ENCODE measurements at regions of chr5 and their contacts with region 1.

Region 1: DNA sequence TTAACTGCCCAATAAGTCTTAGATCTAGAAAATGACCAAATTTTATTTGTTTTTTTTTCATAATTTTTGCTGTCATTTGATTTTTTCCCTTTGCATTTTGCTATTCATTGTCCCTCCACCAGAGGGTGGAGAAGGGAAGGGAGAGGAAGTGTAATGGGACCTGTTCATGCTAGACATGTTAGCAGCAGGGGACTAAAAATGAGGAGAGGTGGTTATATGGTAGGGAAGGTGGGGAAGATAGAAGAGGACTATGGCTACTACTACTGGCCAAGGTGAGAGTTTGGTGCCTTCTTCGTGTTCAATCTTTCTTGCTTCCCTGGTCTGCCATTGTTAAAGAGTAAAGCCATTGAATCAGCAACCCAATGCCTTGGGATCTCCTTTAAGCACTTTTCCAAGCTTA is 6.4 kb downstream of the GRIA1 start:
- DNase-seq: peak in 1 of 2 donors; percentile 8
- ATAC-seq: peak in 2 of 8 donors; percentile 52 to 53
- H3K4me3 ChIP-seq: no peak overlapping the region
- H3K27ac ChIP-seq: no peak overlapping the region
- H3K4me1 ChIP-seq: no peaks in the 10 kb centered on the region
- H3K27me3 ChIP-seq: peaks cover 0 to 24% (median 15%) of the 10 kb centered on the region in 7 donors
- CTCF ChIP-seq: peak; percentile 54 to 80 (median 74)

Region 2: GRCh38 chr5:152532714-152533113 is 964.1 kb before region 1 on chr5:
- intact Hi-C with region 1: loop called in 2 of 10 experiments (anchors 10 kb)
- DNase-seq: peak in 1 of 2 donors; percentile 17
- ATAC-seq: peak in 2 of 8 donors; percentile 22 to 46
- H3K4me3 ChIP-seq: no peak overlapping the region
- H3K27ac ChIP-seq: no peak overlapping the region
- H3K4me1 ChIP-seq: peaks cover 0 to 13% (median 0%) of the 10 kb centered on the region in 9 donors
- H3K27me3 ChIP-seq: no peaks in the 10 kb centered on the region
- CTCF ChIP-seq: peak in 8 of 9 donors; percentile 20 to 69 (median 61)

Region 3: GRCh38 chr5:153159611-153160010 is 337.2 kb before region 1 on chr5:
- intact Hi-C with region 1: no loop called
- DNase-seq: no peak
- ATAC-seq: no peak
- H3K4me3 ChIP-seq: no peak overlapping the region
- H3K27ac ChIP-seq: no peak overlapping the region
- H3K4me1 ChIP-seq: no peaks in the 10 kb centered on the region
- H3K27me3 ChIP-seq: no peaks in the 10 kb centered on the region
- CTCF ChIP-seq: no peak

Region 4: DNA sequence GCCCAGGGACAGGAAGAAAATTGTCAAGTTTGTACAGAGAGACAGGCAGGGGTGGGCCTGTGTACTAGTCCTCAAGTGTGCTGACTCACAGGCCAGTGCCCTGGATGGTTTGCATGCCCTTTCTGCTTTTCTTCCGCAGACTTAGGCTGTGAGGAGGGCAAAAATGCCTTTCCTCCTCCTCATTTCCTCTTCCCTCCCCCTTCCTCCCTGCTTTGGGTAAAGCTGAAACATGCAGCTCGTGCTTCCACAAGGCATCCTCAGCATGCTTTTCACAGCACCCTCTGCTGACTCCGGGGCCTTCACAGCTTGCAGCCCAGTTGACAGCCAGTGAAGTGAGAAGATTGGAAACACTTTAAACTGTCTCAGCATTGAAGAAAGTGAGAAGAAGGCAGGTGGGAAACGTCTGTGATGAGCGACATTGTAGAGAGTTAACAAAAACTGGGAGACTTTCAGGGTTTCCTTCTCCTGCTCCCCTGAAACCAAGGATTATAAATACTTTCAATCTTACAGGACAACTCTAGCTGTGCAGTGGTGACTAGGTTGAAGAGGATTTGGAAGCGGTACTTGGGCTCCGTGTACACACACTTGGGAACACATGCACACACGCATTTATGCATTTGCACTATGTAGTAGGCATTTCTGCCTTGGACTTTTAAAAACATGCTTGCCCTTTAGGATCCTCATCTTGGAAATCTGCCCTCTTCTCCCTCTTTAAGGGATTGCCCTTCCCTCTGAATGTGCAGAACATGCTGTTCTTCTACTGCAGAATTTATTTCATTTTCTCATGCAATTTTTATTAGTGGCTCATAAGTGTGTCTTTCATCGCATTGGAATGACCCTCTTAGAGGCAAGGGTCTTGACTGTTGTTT is 132.4 kb after region 1 on chr5:
- intact Hi-C with region 1: loop called in 1 of 10 experiments (anchors 5 kb)
- DNase-seq: peak in 1 of 2 donors; percentile 17
- ATAC-seq: peak in 7 of 8 donors; percentile 42 to 70 (median 63)
- H3K4me3 ChIP-seq: no peak overlapping the region
- H3K27ac ChIP-seq: peak overlapping the region in 5 of 10 donors; percentile 12 to 58 (median 35)
- H3K4me1 ChIP-seq: peaks cover 2 to 34% (median 10%) of the 10 kb centered on the region in 9 donors
- H3K27me3 ChIP-seq: no peaks in the 10 kb centered on the region
- CTCF ChIP-seq: peak in 4 of 9 donors; percentile 22 to 40 (median 36)

Region 5: DNA sequence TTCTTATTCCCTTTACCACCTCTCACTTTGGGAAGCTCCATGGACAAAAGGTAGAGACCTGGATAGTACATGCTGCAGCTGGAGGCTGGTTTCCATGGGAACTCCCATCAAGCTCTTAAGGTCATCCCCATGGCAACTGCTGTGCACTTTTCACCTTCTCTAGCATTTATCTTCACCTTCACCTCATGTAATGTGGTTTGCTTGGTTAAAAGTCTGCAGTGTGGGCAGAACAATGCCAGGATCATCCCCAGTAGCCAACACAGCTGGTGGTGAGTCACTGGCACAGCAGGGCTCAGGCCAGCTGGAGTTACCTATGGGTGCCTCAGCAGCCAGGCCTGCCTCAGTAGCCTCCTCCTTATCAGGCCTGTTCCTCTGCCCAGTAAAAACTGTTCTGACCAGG is 204.1 kb after region 1 on chr5:
- intact Hi-C with region 1: loop called in 1 of 10 experiments (anchors 10 kb)
- DNase-seq: no peak
- ATAC-seq: no peak
- H3K4me3 ChIP-seq: no peak overlapping the region
- H3K27ac ChIP-seq: no peak overlapping the region
- H3K4me1 ChIP-seq: no peaks in the 10 kb centered on the region
- H3K27me3 ChIP-seq: peaks cover 0 to 4% (median 0%) of the 10 kb centered on the region in 7 donors
- CTCF ChIP-seq: no peak

Region 6: GRCh38 chr5:153711755-153712154 is 214.9 kb after region 1 on chr5:
- intact Hi-C with region 1: loop called in 9 of 10 experiments (anchors 2 to 10 kb)
- DNase-seq: no peak
- ATAC-seq: no peak
- H3K4me3 ChIP-seq: no peak overlapping the region
- H3K27ac ChIP-seq: no peak overlapping the region
- H3K4me1 ChIP-seq: no peaks in the 10 kb centered on the region
- H3K27me3 ChIP-seq: no peaks in the 10 kb centered on the region
- CTCF ChIP-seq: peak in 7 of 9 donors; percentile 24 to 55 (median 45)

Region 7: DNA sequence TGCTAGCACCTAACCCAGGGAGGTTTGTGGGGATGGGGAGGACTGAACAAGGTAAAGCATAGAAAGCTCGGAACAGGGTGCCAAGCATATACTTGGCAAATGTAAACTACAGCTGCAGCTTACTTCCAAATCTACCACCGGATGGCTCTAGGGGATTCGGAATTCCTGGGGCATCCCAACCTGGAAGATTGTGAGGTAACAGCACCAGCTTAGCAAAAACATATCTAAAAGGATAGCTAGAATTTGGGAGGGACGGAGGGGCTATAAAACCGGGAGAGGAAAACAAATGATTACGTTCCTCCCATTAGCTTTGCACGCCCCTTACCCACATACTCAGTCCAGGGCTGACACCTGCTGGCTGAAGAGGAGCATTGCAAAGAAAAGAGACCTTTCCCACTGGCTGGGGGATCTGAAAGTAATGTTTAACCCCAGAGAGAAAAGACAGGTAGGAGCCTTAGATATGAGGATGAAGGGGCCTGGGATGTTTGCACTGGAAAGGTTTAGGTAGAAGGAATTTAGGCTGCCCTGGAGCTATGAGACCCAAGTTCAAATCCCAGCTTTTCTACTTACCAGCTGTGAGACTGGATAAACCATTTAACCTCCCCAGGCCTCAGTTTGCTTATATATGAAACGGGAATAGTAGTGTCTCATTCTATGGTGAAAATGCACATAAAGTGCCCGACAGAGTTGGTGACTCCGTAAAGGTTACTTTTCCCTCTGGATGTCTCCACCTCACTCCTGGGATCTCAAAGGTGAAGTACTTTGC is 468.2 kb after region 1 on chr5:
- intact Hi-C with region 1: loop called (anchors 1 to 5 kb)
- DNase-seq: peak; percentile 20 to 35
- ATAC-seq: peak; percentile 55 to 86 (median 78)
- H3K4me3 ChIP-seq: peak overlapping the region in 2 of 10 donors; percentile 15 to 19
- H3K27ac ChIP-seq: no peak overlapping the region
- H3K4me1 ChIP-seq: no peaks in the 10 kb centered on the region
- H3K27me3 ChIP-seq: peaks cover 0 to 11% (median 0%) of the 10 kb centered on the region in 7 donors
- CTCF ChIP-seq: peak; percentile 67 to 95 (median 86)

Measured in heart right ventricle (tissue), 16 donors.